ENCODE measurements at regions of chr19 and their contacts with region 1.

Region 1: GRCh38 chr19:32971715-32972540 is at the starts of genes CEP89 and FAAP24:
- DNase-seq: peak; percentile 99
- H3K4me3 ChIP-seq: peak within 1 kb of the TSS; percentile 75
- H3K27ac ChIP-seq: peak within 1 kb of the TSS; percentile 35
- H3K4me1 ChIP-seq: peaks cover 5% of the 10 kb centered on the region
- CTCF ChIP-seq: no peak
- total RNA-seq, gene CEP89: 10.8 and 15.8 TPM in 2 replicates
- total RNA-seq, gene FAAP24: 5.4 and 12.1 TPM in 2 replicates

Region 2: DNA sequence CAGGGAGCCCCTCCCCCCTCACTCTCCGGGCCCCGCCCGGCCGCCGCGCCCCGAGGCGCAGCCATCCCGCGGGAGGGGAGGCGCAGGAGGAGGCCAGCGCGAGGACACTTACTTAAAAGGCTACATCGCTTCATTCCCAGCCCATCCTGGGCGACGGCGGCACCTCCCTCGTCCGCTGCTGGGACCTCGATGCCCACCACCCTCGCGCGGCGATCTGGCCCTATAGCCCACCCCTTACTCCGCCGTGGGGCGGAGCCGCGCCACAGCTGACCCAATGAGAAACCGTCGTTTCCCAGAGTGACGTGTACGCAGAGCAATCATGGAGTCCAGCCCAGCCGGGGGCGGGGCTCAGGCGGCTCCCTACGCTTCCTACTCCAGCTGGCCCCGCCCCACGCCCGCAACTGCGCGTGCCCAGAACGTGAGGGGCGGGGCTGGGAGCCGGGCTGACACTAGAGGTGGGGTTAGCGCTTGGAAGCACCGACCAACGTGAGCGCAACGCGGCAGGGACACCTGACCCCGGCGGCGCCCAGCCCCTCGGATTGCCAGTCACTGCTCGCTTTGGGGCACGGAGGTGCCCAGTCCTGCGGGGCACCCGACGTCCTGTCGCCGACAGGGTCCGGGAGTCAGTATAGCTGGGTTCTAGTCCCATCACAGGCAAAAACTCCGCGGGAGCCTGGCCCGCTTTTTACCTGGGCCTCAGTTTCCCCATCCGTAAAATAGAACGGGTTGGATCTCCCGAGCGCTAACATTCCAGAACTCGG is 296.8 kb before region 1 on chr19 and contains the start of gene ANKRD27:
- CTCF ChIA-PET with region 1: no interaction called
- POLR2A ChIA-PET with region 1: no interaction called
- intact Hi-C with region 1: loop called (anchors 5 kb)
- DNase-seq: peak; percentile 99
- H3K4me3 ChIP-seq: peak within 1 kb of the TSS; percentile 99
- H3K27ac ChIP-seq: peak within 1 kb of the TSS; percentile 36
- H3K4me1 ChIP-seq: peaks cover 21% of the 10 kb centered on the region
- CTCF ChIP-seq: no peak
- total RNA-seq, gene ANKRD27: 39.3 and 43.0 TPM in 2 replicates

Region 3: GRCh38 chr19:32936065-32936464 is 35.9 kb before region 1 on chr19:
- CTCF ChIA-PET with region 1: no interaction called
- POLR2A ChIA-PET with region 1: no interaction called
- intact Hi-C with region 1: no loop called
- DNase-seq: no peak
- H3K4me3 ChIP-seq: no peak overlapping the region
- H3K27ac ChIP-seq: no peak overlapping the region
- H3K4me1 ChIP-seq: no peaks in the 10 kb centered on the region
- CTCF ChIP-seq: no peak

Region 4: GRCh38 chr19:33080761-33081681 is 109.1 kb after region 1 on chr19 and contains the start of gene GPATCH1:
- CTCF ChIA-PET with region 1: no interaction called
- POLR2A ChIA-PET with region 1: interaction called, 4 read pairs
- intact Hi-C with region 1: loop called (anchors 10 kb)
- DNase-seq: peak; percentile 82
- H3K4me3 ChIP-seq: peak within 1 kb of the TSS; percentile 84
- H3K27ac ChIP-seq: peak within 1 kb of the TSS; percentile 17
- H3K4me1 ChIP-seq: peaks cover 5% of the 10 kb centered on the region
- CTCF ChIP-seq: no peak
- total RNA-seq, gene GPATCH1: 7.6 and 9.8 TPM in 2 replicates

Region 5: GRCh38 chr19:33118643-33119042 is 146.7 kb after region 1 on chr19:
- CTCF ChIA-PET with region 1: no interaction called
- POLR2A ChIA-PET with region 1: no interaction called
- intact Hi-C with region 1: loop called (anchors 1 kb)
- DNase-seq: no peak
- H3K4me3 ChIP-seq: no peak overlapping the region
- H3K27ac ChIP-seq: no peak overlapping the region
- H3K4me1 ChIP-seq: no peaks in the 10 kb centered on the region
- CTCF ChIP-seq: no peak

Measured in OCI-LY7 (cell line).